Activated CD4-positive, alpha-beta T cell treated with anti-CD3 and anti-CD28 coated beads, Interleukin-2, amount 10 ng/mL, durations not matched to agents 7 days and 5 days (primary cell): ENCODE measurements at regions of chr15 and their contacts with region 1.

Region 1: GRCh38 chr15:40307421-40308211 is at the start of gene PLCB2:
- DNase-seq: peak; percentile 79
- H3K4me3 Mint-ChIP-seq: peak within 1 kb of the TSS; percentile 99
- H3K27ac Mint-ChIP-seq: peak within 1 kb of the TSS; percentile 98
- H3K4me1 Mint-ChIP-seq: peaks cover 42% of the 10 kb centered on the region
- H3K27me3 Mint-ChIP-seq: peaks cover 7% of the 10 kb centered on the region
- total RNA-seq, gene PLCB2: 195 to 196 TPM

Region 2: GRCh38 chr15:40282144-40282868 is 25.3 kb before region 1 on chr15:
- CTCF ChIA-PET with region 1: interaction called, 61 read pairs
- POLR2A ChIA-PET with region 1: interaction called, 4 read pairs
- DNase-seq: peak; percentile 46
- H3K4me3 Mint-ChIP-seq: peak overlapping the region; percentile 64
- H3K27ac Mint-ChIP-seq: no peak overlapping the region
- H3K4me1 Mint-ChIP-seq: peaks cover 3% of the 10 kb centered on the region
- H3K27me3 Mint-ChIP-seq: peaks cover 44% of the 10 kb centered on the region

Region 3: GRCh38 chr15:40323239-40323952 is 15.8 kb after region 1 on chr15 and contains the start of gene INAFM2:
- CTCF ChIA-PET with region 1: interaction called, 93 read pairs
- POLR2A ChIA-PET with region 1: interaction called, 3 read pairs
- DNase-seq: peak; percentile 90
- H3K4me3 Mint-ChIP-seq: peak within 1 kb of the TSS; percentile 70
- H3K27ac Mint-ChIP-seq: no peak within 1 kb of the TSS
- H3K4me1 Mint-ChIP-seq: peaks cover 29% of the 10 kb centered on the region
- H3K27me3 Mint-ChIP-seq: peaks cover 12% of the 10 kb centered on the region
- total RNA-seq, gene INAFM2: 6.6 to 8.5 TPM